Right cardiac atrium (tissue), 5 donors: ENCODE measurements at regions of chr9 and their contacts with region 1.

Region 1: DNA sequence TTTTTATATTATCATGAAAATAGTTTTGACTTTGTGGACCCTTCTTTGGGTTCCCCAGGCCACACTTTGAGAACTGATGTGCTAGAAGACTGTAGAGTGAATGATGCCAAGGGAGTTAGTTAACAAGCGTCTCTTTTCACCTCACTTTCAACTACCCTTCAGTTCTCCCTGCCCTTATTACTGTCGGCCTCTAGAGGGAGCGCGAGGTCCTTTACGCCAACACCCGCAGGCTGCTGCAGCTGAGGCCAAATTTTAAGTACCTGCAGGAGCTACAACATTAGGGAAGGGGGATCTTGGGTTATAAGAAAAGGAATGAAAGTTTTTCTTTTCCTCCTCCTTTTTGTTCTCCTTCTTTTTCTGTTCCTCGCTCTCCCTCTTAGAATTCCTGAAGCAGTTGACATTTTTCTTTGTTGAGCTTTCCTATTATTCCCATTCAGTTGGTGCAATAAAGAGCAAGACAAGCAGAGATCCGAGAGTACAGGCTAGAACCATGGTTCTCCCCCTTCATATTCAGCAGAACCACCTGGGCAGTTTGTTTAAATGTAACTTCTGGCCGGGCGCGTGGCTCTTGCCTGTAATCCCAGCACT is 84.0 kb downstream of the ZFAND5 start:
- DNase-seq: peak; percentile 66 to 84 (median 81)
- ATAC-seq: peak; percentile 86 to 88
- H3K4me3 ChIP-seq: no peak overlapping the region
- H3K27ac ChIP-seq: no peak overlapping the region
- H3K4me1 ChIP-seq: no peaks in the 10 kb centered on the region
- H3K27me3 ChIP-seq: no peaks in the 10 kb centered on the region

Region 2: GRCh38 chr9:72217306-72217842 is 63.6 kb before region 1 on chr9:
- intact Hi-C with region 1: no loop called
- DNase-seq: no peak
- ATAC-seq: no peak
- H3K4me3 ChIP-seq: no peak overlapping the region
- H3K27ac ChIP-seq: no peak overlapping the region
- H3K4me1 ChIP-seq: no peaks in the 10 kb centered on the region
- H3K27me3 ChIP-seq: no peaks in the 10 kb centered on the region

Region 3: GRCh38 chr9:72322259-72322658 is 41.3 kb after region 1 on chr9:
- intact Hi-C with region 1: no loop called
- DNase-seq: no peak
- ATAC-seq: no peak
- H3K4me3 ChIP-seq: no peak overlapping the region
- H3K27ac ChIP-seq: no peak overlapping the region
- H3K4me1 ChIP-seq: no peaks in the 10 kb centered on the region
- H3K27me3 ChIP-seq: no peaks in the 10 kb centered on the region

Region 4: GRCh38 chr9:72817413-72817812 is 536.4 kb after region 1 on chr9:
- intact Hi-C with region 1: loop called in 2 of 4 experiments (anchors 2 to 5 kb)
- DNase-seq: no peak
- ATAC-seq: no peak
- H3K4me3 ChIP-seq: no peak overlapping the region
- H3K27ac ChIP-seq: no peak overlapping the region
- H3K4me1 ChIP-seq: peaks cover 1% of the 10 kb centered on the region
- H3K27me3 ChIP-seq: no peaks in the 10 kb centered on the region